H1 (cell line): ENCODE measurements at regions of chr6 and their contacts with region 1.

Region 1: DNA sequence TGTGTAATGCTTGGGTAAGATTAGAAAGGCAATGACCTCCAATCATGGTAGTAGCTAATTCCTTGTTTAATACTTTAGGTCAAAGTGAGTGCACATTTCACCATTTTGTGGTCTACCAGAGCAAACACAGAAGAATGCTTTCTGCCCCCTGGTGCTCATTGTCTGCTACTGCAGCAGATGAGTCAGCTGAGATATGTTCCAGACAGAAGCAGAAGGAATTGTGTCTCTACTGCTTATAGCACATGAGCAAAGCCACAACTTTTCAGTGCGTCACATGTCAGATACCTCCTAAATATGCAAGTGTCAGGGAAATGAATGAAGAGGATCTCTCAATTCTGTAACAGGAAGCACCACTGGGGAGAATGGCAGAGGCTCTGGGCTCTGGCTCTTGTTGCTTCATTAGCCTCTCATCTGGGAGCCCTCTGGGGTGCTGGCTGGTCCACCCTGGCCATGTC is 308.9 kb downstream of the ALDH8A1 start:
- DNase-seq: peak; percentile 9 to 74
- H3K4me3 ChIP-seq: no peak overlapping the region
- H3K27ac ChIP-seq: no peak overlapping the region
- H3K4me1 ChIP-seq: peaks cover 0 to 6% (median 0%) of the 10 kb centered on the region in 4 experiments; a peak in 3 of 7 replicates
- H3K27me3 ChIP-seq: no peaks in the 10 kb centered on the region
- CTCF ChIP-seq: peak in 2 of 3 experiments; percentile 73 to 91; a peak in 3 of 4 replicates
- EP300 ChIP-seq: no peak
- POLR2A ChIP-seq: no peak
- RAD21 ChIP-seq: peak; percentile 86 to 90

Region 2: DNA sequence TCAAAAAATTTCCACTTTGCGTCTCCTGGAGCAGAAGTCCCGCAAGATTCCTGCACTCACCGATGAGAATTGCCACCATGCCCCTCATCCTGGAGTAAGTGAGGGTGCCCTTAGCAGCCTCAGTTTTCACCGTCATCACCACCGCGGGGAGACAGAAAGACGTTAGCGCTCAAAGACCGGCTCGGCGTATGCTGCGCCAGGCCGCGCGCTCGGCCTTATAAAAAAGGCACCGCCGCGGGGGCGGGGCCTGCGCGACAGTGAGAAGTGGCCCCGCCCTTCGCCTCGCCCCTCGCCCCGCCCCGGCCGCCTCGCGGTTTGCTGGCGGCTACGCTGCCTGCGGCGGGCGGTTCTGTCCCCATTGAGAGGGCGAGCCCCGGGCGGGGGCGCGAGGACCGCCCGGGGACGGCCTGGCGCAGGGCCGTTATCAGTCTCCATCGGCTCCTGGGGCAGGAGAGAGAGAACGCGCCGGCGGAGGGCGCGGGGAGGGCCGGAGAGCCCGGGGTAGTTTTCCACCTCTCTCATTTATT is 466.3 kb before region 1 on chr6:
- CTCF ChIA-PET with region 1: interaction called, 20 read pairs
- POLR2A ChIA-PET with region 1: interaction called, 9 read pairs
- DNase-seq: peak; percentile 77 to 96
- H3K4me3 ChIP-seq: peak overlapping the region; percentile 53 to 76 (median 67)
- H3K27ac ChIP-seq: peak overlapping the region; percentile 50; the same call in 1 of the 2 replicates
- H3K4me1 ChIP-seq: peaks cover 4 to 13% (median 8%) of the 10 kb centered on the region in 4 experiments; a peak in 6 of 7 replicates
- H3K27me3 ChIP-seq: peaks cover 0 to 18% (median 12%) of the 10 kb centered on the region in 4 experiments; a peak in 6 of 7 replicates
- CTCF ChIP-seq: no peak
- EP300 ChIP-seq: no peak; a peak in 1 of 3 replicates
- POLR2A ChIP-seq: peak; percentile 98 to 99
- RAD21 ChIP-seq: no peak; a peak in 2 of 4 replicates

Region 3: DNA sequence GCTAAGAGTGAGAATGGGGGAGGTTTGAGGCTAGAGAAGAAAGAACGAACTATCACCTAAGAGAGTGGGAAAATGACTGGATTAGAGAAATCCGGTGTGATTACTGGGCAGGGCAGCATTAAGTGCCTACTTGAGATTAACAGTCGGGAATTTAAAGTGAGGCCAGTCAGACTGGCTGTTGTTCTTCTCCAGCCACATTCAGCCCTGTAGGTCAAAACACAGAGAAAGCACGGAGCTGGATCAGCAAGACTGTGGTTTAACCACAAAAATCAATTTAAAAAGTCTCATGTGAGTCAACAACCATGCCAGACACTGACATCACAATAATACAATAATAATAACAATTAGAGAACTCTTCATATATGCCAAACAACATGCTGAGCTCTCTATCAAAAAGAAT is 21.2 kb before region 1 on chr6:
- CTCF ChIA-PET with region 1: interaction called, 34 read pairs
- POLR2A ChIA-PET with region 1: no interaction called
- DNase-seq: no peak
- H3K4me3 ChIP-seq: no peak overlapping the region
- H3K27ac ChIP-seq: no peak overlapping the region
- H3K4me1 ChIP-seq: no peaks in the 10 kb centered on the region; a peak in 1 of 7 replicates
- H3K27me3 ChIP-seq: no peaks in the 10 kb centered on the region
- CTCF ChIP-seq: no peak
- EP300 ChIP-seq: no peak
- POLR2A ChIP-seq: no peak
- RAD21 ChIP-seq: no peak

Region 4: DNA sequence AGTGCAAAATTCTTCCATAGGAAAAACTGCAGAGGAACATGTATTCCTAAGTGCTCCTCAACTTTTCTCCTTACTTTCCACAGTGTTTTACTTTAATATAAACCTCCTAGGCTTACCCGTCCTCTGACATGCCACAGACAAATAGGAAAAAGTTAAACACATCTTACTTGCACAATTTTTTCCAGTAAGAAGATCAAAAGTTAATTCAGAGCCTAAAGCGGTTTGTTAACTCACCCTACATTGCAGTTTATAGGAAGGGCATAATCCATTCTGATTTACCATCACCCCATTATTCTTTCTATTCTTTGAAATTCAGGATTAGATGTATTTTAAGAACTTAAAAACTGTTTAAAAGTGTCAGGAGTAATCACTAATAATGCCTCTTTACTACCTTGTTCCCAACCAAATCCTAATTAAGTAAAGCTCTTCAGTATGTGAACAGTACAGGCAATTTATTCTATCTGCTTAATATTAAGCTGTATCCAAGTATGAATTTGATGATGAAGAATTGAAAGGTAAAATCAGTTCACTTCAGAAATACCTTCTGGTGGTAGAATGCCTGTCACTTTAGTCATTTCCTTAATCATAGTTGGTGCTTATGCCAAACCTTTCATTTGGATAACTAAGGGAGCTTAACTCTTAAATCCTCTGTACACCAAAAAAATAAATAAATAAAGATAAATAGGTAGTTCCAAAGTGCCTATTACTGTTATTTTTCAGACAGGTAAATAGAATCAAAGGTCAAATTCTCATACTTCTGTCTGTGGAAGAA is 16.9 kb after region 1 on chr6:
- CTCF ChIA-PET with region 1: interaction called, 23 read pairs
- POLR2A ChIA-PET with region 1: no interaction called
- DNase-seq: no peak
- H3K4me3 ChIP-seq: no peak overlapping the region
- H3K27ac ChIP-seq: no peak overlapping the region
- H3K4me1 ChIP-seq: no peaks in the 10 kb centered on the region
- H3K27me3 ChIP-seq: no peaks in the 10 kb centered on the region
- CTCF ChIP-seq: no peak
- EP300 ChIP-seq: no peak
- POLR2A ChIP-seq: no peak
- RAD21 ChIP-seq: no peak

Region 5: DNA sequence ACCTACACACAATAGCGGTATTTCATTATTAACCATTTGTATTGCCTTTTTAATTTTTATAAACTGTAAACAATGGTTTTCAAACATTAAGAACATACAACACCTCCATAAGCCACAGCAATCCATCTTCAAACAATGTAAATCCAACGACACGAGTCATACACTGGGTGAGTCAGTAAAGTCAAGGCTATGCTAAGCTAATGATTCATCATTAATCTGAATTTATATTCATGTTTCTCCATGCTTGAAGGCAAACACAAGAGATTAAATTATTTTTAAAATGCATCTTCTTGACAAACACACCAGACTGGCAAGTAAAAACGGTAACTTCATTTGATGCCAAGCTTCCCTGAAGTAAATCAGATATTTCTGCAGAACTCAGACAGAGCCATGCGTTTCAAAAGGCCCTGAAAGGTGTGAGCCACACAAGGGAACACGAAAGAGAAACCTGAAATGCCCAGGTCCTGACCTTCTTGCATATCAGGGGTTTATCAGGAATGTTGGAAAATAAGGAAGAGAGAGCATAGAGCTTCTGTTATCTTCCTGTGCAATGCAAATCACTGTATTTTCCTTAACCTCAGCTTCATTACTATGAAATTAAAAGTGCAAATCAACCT is 146.4 kb after region 1 on chr6:
- CTCF ChIA-PET with region 1: no interaction called
- POLR2A ChIA-PET with region 1: no interaction called
- DNase-seq: no peak
- H3K4me3 ChIP-seq: no peak overlapping the region
- H3K27ac ChIP-seq: no peak overlapping the region
- H3K4me1 ChIP-seq: no peaks in the 10 kb centered on the region
- H3K27me3 ChIP-seq: no peaks in the 10 kb centered on the region
- CTCF ChIP-seq: no peak
- EP300 ChIP-seq: no peak
- POLR2A ChIP-seq: no peak
- RAD21 ChIP-seq: no peak

Region 6: DNA sequence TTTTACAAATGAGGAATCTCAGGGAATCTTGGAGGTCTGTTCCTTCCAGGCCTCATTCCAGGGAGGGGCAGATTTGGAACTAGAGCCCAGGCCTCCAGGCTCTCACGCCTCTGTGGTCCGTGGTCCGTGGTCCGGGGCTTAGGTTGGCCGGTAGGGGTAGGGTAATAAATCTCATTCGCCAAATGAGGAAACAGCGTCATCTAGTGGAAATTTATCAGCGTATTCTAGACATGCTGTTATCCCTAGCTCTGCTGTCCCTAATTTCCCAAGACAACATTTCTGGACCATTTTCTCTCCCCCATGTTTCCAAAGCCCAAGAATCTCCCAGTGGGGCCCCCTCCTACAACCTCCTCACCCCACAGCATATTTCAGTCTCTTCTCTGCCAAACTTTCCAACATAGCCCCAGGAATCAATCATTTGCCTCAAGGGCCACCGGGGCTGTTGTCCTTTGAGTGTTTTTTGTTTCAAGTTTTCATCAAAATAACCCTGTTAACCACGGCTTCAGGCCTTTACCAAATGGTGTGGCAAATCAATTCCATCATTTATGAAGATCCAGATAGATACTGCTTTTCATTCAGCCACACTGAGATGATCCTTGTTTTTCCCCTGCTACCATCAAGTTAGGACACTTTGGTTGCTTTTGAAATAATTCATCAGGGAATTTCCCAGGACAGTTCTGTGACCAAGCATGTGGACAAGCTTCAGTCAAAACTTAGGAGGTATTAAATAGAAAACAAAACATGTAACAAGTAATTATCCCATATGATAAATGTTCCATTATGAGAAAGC is 182.1 kb after region 1 on chr6:
- CTCF ChIA-PET with region 1: interaction called, 10 read pairs
- POLR2A ChIA-PET with region 1: no interaction called
- DNase-seq: peak in 1 of 2 experiments; percentile 44
- H3K4me3 ChIP-seq: no peak overlapping the region
- H3K27ac ChIP-seq: no peak overlapping the region
- H3K4me1 ChIP-seq: no peaks in the 10 kb centered on the region
- H3K27me3 ChIP-seq: no peaks in the 10 kb centered on the region
- CTCF ChIP-seq: peak; percentile 26 to 99 (median 92)
- EP300 ChIP-seq: no peak
- POLR2A ChIP-seq: no peak
- RAD21 ChIP-seq: peak; percentile 100

Region 7: DNA sequence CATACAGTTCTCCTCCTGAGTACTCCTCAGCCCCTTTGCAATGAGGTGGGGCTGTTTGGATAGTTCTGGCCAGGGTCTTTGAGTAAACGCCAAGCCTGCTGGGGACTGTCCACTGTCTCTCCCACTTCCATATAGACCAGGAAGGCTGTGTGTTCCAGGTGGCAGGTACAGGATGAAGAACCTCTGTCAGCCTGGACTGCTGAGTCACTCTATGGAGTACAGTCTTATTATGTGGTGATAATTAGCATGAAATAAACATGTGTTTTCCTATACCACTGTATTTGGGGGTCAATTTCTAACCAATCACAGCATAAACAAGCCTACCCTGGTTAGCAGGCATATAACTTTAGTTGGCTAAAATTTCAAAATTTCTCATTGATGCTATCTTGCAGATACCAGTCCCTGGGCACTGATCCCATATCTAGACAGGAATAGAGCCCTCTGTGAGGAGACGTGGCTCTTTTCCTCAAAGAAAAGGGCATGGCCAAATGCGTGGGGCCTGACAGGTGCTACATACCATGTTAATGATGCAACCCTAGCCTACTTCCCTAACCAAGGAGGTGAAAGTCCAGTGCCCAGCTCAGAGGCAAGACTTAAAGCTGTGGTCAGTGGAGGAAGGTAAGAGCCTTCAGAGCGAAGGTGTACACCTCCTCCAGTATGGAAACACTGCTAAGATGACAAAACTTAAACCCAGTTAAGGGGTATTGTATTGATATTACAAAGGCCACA is 313.4 kb after region 1 on chr6:
- CTCF ChIA-PET with region 1: no interaction called
- POLR2A ChIA-PET with region 1: no interaction called
- DNase-seq: no peak
- H3K4me3 ChIP-seq: no peak overlapping the region
- H3K27ac ChIP-seq: no peak overlapping the region
- H3K4me1 ChIP-seq: no peaks in the 10 kb centered on the region
- H3K27me3 ChIP-seq: no peaks in the 10 kb centered on the region
- CTCF ChIP-seq: no peak
- EP300 ChIP-seq: no peak
- POLR2A ChIP-seq: no peak
- RAD21 ChIP-seq: no peak